ENCODE measurements at regions of chr2 and their contacts with region 1.

Region 1: DNA sequence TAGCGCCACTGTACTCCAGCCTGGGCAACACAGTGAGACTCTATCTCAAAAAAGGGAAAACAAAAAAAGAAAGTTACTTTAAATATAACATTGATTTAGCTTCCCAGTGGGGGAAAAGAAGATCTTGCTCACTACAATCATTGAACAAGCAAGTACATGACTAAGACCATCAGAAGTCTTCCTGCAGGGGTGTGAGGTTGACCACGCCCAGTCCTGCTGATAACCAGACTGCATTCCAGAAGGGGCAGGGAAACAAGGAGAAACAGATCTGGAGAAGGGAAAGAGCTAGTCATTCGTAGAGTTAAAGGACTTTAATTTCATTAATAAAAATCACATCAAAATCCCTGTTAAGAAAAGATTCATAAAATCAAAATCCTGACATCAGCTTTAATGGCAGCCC is 77.5 kb downstream of the EPHA4 start:
- DNase-seq: no peak
- ATAC-seq: no peak
- H3K4me3 ChIP-seq: no peak overlapping the region
- H3K27ac ChIP-seq: no peak overlapping the region
- H3K4me1 ChIP-seq: no peaks in the 10 kb centered on the region
- H3K27me3 ChIP-seq: no peaks in the 10 kb centered on the region
- CTCF ChIP-seq: no peak
- EP300 ChIP-seq: no peak
- POLR2A ChIP-seq: no peak
- RAD21 ChIP-seq: no peak

Region 2: DNA sequence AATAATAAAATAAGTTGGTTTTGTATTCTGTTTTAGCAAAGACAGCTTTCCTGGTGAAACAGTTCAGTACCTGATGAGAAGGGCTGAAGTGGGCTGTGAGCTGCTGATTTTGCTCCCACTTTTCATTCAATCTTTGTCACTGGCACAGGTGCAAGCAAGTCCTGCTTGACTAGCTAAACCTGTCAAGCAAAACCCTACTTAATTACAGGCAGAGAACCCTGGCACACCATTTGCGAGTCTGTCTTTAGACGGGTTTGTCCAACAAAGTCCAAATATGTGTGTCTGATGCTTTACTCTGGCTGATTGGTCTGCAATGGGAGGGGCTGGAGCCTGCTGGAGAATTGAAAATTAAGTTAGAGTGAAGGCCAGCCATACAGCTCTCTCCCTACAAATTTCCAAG is 189.6 kb before region 1 on chr2:
- CTCF ChIA-PET with region 1: no interaction called
- POLR2A ChIA-PET with region 1: interaction called, 13 read pairs
- RAD21 ChIA-PET with region 1: no interaction called
- SMC1A ChIA-PET with region 1: no interaction called
- in situ Hi-C with region 1: no loop called
- intact Hi-C with region 1: no loop called
- DNase-seq: no peak
- ATAC-seq: no peak; the same call in 2 of the 3 replicates
- H3K4me3 ChIP-seq: no peak overlapping the region
- H3K27ac ChIP-seq: no peak overlapping the region
- H3K4me1 ChIP-seq: no peaks in the 10 kb centered on the region
- H3K27me3 ChIP-seq: no peaks in the 10 kb centered on the region; a peak in 1 of 4 replicates
- CTCF ChIP-seq: no peak
- EP300 ChIP-seq: no peak
- POLR2A ChIP-seq: no peak
- RAD21 ChIP-seq: no peak

Region 3: DNA sequence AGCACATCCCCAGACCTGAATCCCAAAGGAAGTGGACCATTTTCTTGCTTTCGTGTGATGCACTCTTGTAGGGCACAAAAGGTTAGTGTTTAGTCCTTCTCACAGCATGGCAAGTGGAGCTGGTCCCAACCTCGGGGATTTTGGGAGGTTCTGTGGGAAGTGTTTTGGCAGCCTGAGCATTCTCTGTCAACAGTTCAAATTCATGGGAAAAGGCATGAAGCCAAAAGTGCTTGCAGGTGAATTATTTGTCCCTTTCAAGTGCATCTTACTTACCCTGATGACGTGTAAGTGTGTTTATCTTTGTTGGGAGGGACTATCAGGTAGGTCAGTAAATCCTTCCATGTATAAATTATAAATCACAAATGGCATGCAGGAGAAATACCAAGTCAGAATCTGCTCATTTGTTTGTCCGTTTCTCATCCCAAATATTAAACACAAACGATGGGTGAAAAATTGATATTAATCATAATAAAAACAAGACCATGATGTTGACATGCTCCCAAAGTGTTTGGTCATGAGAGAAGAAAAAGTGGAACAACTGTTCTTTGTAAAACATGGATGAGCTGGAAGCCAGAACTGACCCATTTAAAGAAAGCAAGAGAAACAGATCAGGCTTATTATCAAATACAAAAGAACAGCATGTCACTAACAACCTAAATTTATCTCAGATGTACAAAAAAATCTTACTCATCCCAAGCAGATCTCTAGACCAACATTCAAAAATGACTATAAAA is 19.9 kb after region 1 on chr2:
- CTCF ChIA-PET with region 1: no interaction called
- POLR2A ChIA-PET with region 1: no interaction called
- RAD21 ChIA-PET with region 1: no interaction called
- SMC1A ChIA-PET with region 1: no interaction called
- in situ Hi-C with region 1: no loop called
- intact Hi-C with region 1: no loop called
- DNase-seq: no peak
- ATAC-seq: no peak
- H3K4me3 ChIP-seq: no peak overlapping the region
- H3K27ac ChIP-seq: no peak overlapping the region
- H3K4me1 ChIP-seq: peaks cover 18% of the 10 kb centered on the region
- H3K27me3 ChIP-seq: no peaks in the 10 kb centered on the region
- CTCF ChIP-seq: no peak
- EP300 ChIP-seq: no peak
- POLR2A ChIP-seq: no peak
- RAD21 ChIP-seq: no peak

Region 4: DNA sequence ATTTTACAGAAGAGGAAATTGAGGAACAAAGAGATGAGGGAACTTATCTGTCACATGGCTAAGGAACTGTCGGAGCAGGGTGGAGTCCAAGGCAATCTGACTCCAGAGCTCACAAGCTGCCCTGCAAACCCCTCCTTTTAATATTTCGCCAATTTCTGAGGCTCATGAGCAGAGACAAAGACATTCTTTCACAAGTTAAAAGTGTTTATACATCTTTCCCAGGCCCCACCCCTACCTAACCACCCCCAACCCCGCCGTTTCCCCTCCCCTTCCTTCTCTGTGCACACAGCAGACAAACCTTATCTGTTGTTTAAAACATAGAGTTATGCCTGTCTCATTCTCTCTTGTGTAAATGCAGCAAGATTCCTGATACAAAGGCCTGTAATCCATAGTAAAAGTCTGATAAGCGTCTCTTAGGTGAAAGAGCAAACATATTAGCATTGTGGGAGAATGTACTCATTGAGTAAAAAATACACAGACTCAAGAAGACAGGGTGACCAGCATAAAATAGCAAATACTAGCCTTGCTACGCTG is 33.3 kb after region 1 on chr2:
- CTCF ChIA-PET with region 1: no interaction called
- POLR2A ChIA-PET with region 1: no interaction called
- RAD21 ChIA-PET with region 1: no interaction called
- SMC1A ChIA-PET with region 1: no interaction called
- in situ Hi-C with region 1: no loop called
- intact Hi-C with region 1: no loop called
- DNase-seq: no peak
- ATAC-seq: no peak
- H3K4me3 ChIP-seq: no peak overlapping the region
- H3K27ac ChIP-seq: no peak overlapping the region
- H3K4me1 ChIP-seq: no peaks in the 10 kb centered on the region
- H3K27me3 ChIP-seq: no peaks in the 10 kb centered on the region; a peak in 1 of 4 replicates
- CTCF ChIP-seq: no peak
- EP300 ChIP-seq: no peak
- POLR2A ChIP-seq: no peak
- RAD21 ChIP-seq: no peak

Region 5: DNA sequence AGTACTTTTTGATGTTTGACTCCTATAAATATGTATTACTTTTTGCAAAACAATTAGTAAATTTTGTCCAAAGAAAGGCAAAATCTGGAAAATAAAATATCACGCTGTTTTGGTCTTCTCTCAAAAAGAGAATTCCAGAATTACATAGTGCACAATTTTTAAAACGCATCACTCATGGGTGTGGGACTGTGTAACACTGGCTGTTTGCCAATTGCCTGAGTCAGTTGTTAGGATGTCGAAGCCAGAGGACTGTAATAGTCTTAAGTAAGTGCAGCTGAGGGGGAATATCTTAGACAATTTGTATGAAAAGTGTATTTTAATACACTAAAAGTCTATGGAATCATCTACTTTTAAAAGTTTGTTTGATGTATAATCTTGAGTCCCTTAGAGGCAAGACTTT is 101.6 kb after region 1 on chr2:
- CTCF ChIA-PET with region 1: no interaction called
- POLR2A ChIA-PET with region 1: no interaction called
- RAD21 ChIA-PET with region 1: no interaction called
- SMC1A ChIA-PET with region 1: no interaction called
- in situ Hi-C with region 1: no loop called
- intact Hi-C with region 1: no loop called
- DNase-seq: no peak
- ATAC-seq: no peak
- H3K4me3 ChIP-seq: no peak overlapping the region
- H3K27ac ChIP-seq: no peak overlapping the region
- H3K4me1 ChIP-seq: no peaks in the 10 kb centered on the region
- H3K27me3 ChIP-seq: no peaks in the 10 kb centered on the region; a peak in 3 of 4 replicates
- CTCF ChIP-seq: no peak
- EP300 ChIP-seq: no peak
- POLR2A ChIP-seq: no peak
- RAD21 ChIP-seq: no peak

Region 6: GRCh38 chr2:221649051-221649775 is 154.7 kb after region 1 on chr2:
- CTCF ChIA-PET with region 1: no interaction called
- POLR2A ChIA-PET with region 1: no interaction called
- RAD21 ChIA-PET with region 1: no interaction called
- SMC1A ChIA-PET with region 1: no interaction called
- in situ Hi-C with region 1: no loop called
- intact Hi-C with region 1: no loop called
- DNase-seq: no peak
- ATAC-seq: no peak
- H3K4me3 ChIP-seq: no peak overlapping the region
- H3K27ac ChIP-seq: no peak overlapping the region
- H3K4me1 ChIP-seq: no peaks in the 10 kb centered on the region
- H3K27me3 ChIP-seq: no peaks in the 10 kb centered on the region
- CTCF ChIP-seq: no peak
- EP300 ChIP-seq: no peak
- POLR2A ChIP-seq: no peak
- RAD21 ChIP-seq: no peak